Head of caudate nucleus (tissue), 42 donors: ENCODE measurements at regions of chr17 and their contacts with region 1.

Region 1: GRCh38 chr17:76385892-76386721 is 1.7 kb downstream of the SPHK1 start:
- DNase-seq: peak; percentile 42 to 87 (median 67)

Region 2: GRCh38 chr17:76314392-76315227 is 71.5 kb before region 1 on chr17:
- intact Hi-C with region 1: loop called (anchors 5 kb)
- DNase-seq: peak in 1 of 42 donors; percentile 16

Region 3: DNA sequence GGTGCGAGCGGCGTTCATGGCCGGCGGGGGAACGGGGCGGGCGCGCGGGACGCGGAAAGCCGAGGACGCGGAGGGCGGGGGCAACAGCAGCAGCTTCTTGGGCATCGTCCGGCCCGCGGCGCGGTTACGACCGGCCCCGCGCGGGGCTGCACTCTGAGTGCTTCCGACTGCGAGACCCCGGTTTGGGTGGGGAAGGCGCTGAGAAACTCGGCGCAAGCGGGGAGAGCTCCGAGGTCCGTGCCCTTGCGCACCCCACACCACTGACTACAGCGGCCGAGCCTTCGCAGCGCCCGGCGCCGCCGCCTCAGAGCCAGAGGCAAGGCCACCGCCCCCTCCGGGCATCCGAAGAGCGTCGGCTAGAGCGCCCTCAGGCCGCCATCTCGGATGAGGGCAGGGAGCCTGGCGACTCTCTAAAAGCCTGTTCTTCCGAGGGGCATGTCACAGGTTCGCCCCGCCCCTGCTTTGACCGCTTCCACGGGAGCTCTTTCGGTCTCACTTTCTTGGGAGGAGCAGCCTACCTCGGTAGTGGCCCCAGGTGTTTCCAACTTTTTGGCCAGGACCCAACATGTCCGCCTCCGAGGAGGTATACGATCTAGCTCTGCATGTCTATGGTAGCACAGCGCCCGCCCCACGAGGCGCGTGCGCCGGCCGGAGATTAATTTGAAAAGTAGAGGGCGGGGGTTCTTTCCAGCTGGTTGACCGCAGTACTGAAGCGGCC is 32.3 kb before region 1 on chr17 and contains the start of gene PRPSAP1:
- intact Hi-C with region 1: loop called (anchors 5 kb)
- DNase-seq: peak; percentile 81 to 95 (median 90)